ENCODE measurements at regions of chr7 and their contacts with region 1.

Region 1: GRCh38 chr7:41977151-41977651 is 259.8 kb downstream of the GLI3 start:
- DNase-seq: peak in 1 of 2 experiments; percentile 55
- H3K4me3 ChIP-seq: no peak overlapping the region
- H3K27ac ChIP-seq: peak overlapping the region; percentile 13; the same call in 1 of the 2 replicates
- H3K4me1 ChIP-seq: peaks cover 0 to 11% (median 4%) of the 10 kb centered on the region in 4 experiments; a peak in 5 of 7 replicates
- H3K27me3 ChIP-seq: no peaks in the 10 kb centered on the region
- CTCF ChIP-seq: peak; percentile 27 to 67 (median 60)
- EP300 ChIP-seq: no peak
- POLR2A ChIP-seq: no peak
- RAD21 ChIP-seq: peak; percentile 64 to 78

Region 2: DNA sequence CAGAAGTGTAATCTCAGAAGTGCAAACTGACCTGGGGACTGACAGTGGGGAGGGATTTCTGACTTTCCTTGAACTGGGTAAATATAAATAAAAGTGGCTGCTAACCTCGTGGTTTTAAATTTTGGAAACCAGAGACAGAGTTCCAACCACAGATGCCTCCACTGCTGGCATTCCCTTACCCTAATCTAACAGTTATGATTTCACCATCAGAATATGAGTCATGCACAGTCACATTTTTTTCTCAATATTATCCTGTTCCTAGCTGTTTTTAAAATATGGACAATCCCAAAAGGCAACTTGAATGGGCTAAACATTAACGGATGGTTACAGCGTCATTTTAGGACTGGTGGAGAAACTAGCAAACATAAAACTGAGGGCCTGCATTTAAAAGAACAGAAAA is 10.0 kb before region 1 on chr7:
- CTCF ChIA-PET with region 1: interaction called, 85 read pairs
- POLR2A ChIA-PET with region 1: no interaction called
- DNase-seq: no peak
- H3K4me3 ChIP-seq: no peak overlapping the region
- H3K27ac ChIP-seq: no peak overlapping the region
- H3K4me1 ChIP-seq: no peaks in the 10 kb centered on the region
- H3K27me3 ChIP-seq: no peaks in the 10 kb centered on the region
- CTCF ChIP-seq: no peak
- EP300 ChIP-seq: no peak
- POLR2A ChIP-seq: no peak
- RAD21 ChIP-seq: no peak

Region 3: DNA sequence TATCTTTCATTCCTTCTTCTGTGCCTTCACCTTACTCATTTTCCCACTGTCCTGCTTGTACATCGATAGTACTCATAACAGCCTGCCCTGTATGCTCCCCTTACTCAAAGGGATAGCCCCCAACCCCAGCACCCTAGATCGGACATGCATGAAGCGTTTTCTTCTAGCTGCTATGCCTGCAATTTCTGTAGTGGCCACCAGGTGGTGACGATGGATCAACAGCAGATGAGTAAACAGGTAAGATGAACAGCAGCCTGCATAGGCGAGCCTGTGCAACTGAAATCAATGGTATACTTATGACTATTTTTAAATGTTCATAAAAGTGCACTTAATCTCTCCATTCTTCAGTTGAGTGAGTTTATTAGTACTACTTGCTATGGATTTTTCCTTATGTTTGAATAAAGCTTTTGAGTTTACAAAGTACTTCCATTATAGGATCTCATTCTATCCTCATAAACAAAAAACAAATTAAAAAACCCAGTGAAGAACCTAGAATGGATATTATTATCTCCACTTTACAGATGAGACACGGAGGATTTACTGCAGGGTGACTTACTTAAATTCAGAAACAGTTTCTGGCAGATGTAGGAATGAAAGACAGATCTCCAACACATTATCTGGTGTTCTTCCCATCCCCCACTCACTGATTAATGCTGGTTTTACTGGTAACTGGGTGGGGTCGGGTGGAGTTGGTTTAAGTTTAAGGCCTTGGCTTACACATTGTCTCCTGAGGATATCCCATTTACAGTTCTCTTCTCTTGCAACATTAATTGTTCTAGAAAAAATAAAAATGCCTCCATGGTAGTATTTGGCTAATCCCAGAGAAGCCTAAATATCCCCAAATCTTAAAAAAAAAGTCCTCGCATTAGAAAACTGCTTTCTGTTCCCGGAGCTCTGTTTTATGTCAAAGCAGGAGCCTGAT is 37.7 kb after region 1 on chr7:
- CTCF ChIA-PET with region 1: interaction called, 14 read pairs
- POLR2A ChIA-PET with region 1: no interaction called
- DNase-seq: peak; percentile 23 to 86
- H3K4me3 ChIP-seq: no peak overlapping the region
- H3K27ac ChIP-seq: no peak overlapping the region
- H3K4me1 ChIP-seq: peaks cover 0 to 4% (median 0%) of the 10 kb centered on the region in 4 experiments; a peak in 2 of 7 replicates
- H3K27me3 ChIP-seq: no peaks in the 10 kb centered on the region
- CTCF ChIP-seq: peak; percentile 57 to 89 (median 76)
- EP300 ChIP-seq: no peak
- POLR2A ChIP-seq: no peak
- RAD21 ChIP-seq: peak; percentile 88 to 92

Region 4: DNA sequence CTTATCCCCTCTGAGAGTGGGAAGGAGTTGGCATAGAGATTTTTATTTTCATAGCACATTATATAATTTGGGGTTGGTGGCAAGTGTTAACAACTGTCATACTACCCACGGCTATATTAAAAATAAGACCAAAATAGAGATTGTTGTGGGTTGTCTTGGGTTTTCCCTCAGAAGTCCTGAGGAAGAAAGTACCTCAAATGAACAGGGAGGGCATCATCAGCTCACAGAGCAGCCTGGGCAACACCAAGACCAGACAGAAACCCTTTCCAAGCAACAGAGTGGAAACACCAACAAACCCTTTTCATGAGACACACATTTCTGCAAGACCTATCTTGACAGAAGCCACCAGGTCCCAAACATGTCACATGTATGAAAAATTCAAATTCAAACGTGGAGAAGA is 138.6 kb after region 1 on chr7:
- CTCF ChIA-PET with region 1: interaction called, 14 read pairs
- POLR2A ChIA-PET with region 1: no interaction called
- DNase-seq: no peak
- H3K4me3 ChIP-seq: no peak overlapping the region
- H3K27ac ChIP-seq: no peak overlapping the region
- H3K4me1 ChIP-seq: peaks cover 0 to 4% (median under 1%) of the 10 kb centered on the region in 4 experiments; a peak in 1 of 7 replicates
- H3K27me3 ChIP-seq: no peaks in the 10 kb centered on the region
- CTCF ChIP-seq: peak in 2 of 3 experiments; percentile 15 to 31; a peak in 2 of 4 replicates
- EP300 ChIP-seq: no peak
- POLR2A ChIP-seq: no peak
- RAD21 ChIP-seq: peak; percentile 31 to 51; a peak in 2 of 4 replicates

Region 5: GRCh38 chr7:42690794-42691639 is 713.8 kb after region 1 on chr7:
- CTCF ChIA-PET with region 1: interaction called, 27 read pairs
- POLR2A ChIA-PET with region 1: no interaction called
- DNase-seq: peak in 1 of 2 experiments; percentile 52
- H3K4me3 ChIP-seq: no peak overlapping the region
- H3K27ac ChIP-seq: no peak overlapping the region
- H3K4me1 ChIP-seq: peaks cover 2 to 14% (median 5%) of the 10 kb centered on the region in 4 experiments; a peak in 6 of 7 replicates
- H3K27me3 ChIP-seq: peaks cover 0 to 5% (median 0%) of the 10 kb centered on the region in 4 experiments; a peak in 3 of 7 replicates
- CTCF ChIP-seq: peak; percentile 19 to 82 (median 65)
- EP300 ChIP-seq: no peak
- POLR2A ChIP-seq: no peak
- RAD21 ChIP-seq: peak; percentile 92 to 94

Measured in H1 (cell line).